Ascending aorta (tissue), 2 donors: ENCODE measurements at regions of chr2 and their contacts with region 1.

Region 1: GRCh38 chr2:152635635-152636298 is 81.5 kb downstream of the PRPF40A start:
- DNase-seq: peak in 1 of 2 donors; percentile 69
- H3K4me3 ChIP-seq: no peak overlapping the region
- H3K27ac ChIP-seq: no peak overlapping the region
- H3K4me1 ChIP-seq: no peaks in the 10 kb centered on the region
- H3K27me3 ChIP-seq: no peaks in the 10 kb centered on the region
- CTCF ChIP-seq: peak; percentile 66 to 76 (median 71)

Region 2: GRCh38 chr2:152175458-152176325 is 460.1 kb before region 1 on chr2 and contains the start of gene STAM2:
- intact Hi-C with region 1: loop called (anchors 1 kb)
- DNase-seq: peak; percentile 64 to 96
- H3K4me3 ChIP-seq: peak within 1 kb of the TSS; percentile 75 to 99
- H3K27ac ChIP-seq: peak within 1 kb of the TSS; percentile 92 to 99
- H3K4me1 ChIP-seq: peaks cover 3 to 15% of the 10 kb centered on the region in 2 donors
- H3K27me3 ChIP-seq: no peaks in the 10 kb centered on the region
- CTCF ChIP-seq: peak; percentile 93 to 98 (median 94)
- total RNA-seq, gene STAM2: 4.0 TPM